ENCODE measurements at regions of chr6 and their contacts with region 1.

Region 1: DNA sequence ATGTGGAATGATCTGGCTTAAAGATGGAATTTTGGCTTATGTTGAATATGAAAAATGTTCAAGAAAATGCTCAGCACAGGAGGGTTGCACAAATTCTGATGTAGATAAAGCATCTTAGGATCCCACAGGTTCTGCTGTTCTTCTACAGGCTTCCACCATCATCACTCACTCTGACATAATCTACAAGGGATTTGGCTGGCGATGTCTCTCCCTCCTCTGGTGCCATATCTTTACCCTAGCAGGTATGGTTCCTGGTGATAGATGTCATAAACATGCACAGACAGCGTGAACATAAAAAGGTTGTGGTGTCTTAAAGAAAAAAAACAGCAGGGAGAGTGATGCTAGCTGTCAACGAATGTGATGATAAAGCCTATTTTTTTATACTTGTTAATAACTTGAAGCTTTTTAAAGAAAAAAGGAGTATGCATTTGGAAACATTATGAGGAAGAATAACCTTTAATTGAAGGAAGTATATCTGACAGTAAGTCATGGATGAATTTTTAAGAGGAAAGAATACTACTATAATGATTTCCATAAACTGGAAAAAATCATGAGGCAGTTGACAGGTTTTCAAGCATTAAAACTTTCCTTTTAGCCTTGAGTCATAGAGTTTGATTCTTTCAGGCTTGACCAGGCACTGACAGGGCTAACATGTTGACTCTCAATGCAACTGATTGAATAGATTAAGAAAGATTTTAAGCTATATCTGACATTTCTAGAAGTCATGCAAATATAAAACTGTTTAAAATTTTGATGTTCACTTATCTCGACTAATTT is 50.1 kb downstream of the OGFRL1 start:
- DNase-seq: no peak
- ATAC-seq: no peak
- H3K4me3 ChIP-seq: no peak overlapping the region
- H3K27ac ChIP-seq: no peak overlapping the region
- H3K4me1 ChIP-seq: peaks cover 4% of the 10 kb centered on the region; the same call in 1 of the 2 replicates
- H3K27me3 ChIP-seq: no peaks in the 10 kb centered on the region
- CTCF ChIP-seq: no peak

Region 2: GRCh38 chr6:70280400-70280853 is 1058.3 kb before region 1 on chr6:
- CTCF ChIA-PET with region 1: no interaction called
- POLR2A ChIA-PET with region 1: interaction called, 11 read pairs
- intact Hi-C with region 1: no loop called
- DNase-seq: no peak
- ATAC-seq: no peak
- H3K4me3 ChIP-seq: no peak overlapping the region
- H3K27ac ChIP-seq: no peak overlapping the region
- H3K4me1 ChIP-seq: no peaks in the 10 kb centered on the region
- H3K27me3 ChIP-seq: 0 out of 2 replicates have a peak, but pooled peaks cover 2% of the 10 kb centered on the region
- CTCF ChIP-seq: no peak

Region 3: DNA sequence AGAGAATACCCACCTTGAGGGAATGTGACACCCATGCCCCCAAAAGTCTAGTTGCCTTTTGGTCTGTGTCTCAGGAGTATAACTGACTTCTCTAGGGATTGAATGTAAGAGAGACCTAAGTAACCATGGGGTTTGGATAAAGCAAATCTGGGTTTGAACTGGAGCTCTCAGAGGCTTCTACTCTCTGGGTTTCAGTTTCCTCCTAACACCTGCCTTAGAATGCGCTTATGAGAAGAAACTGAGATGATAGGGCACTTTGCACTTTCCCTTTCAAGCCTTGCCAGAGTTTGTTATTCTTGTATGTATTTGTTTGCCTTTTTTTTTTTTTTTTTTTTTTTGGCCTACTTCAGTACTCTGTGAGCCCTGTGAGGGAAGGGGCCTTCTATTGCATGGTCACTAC is 752.6 kb before region 1 on chr6:
- CTCF ChIA-PET with region 1: no interaction called
- POLR2A ChIA-PET with region 1: no interaction called
- intact Hi-C with region 1: no loop called
- DNase-seq: no peak
- ATAC-seq: no peak
- H3K4me3 ChIP-seq: no peak overlapping the region
- H3K27ac ChIP-seq: no peak overlapping the region
- H3K4me1 ChIP-seq: no peaks in the 10 kb centered on the region
- H3K27me3 ChIP-seq: no peaks in the 10 kb centered on the region
- CTCF ChIP-seq: no peak

Region 4: GRCh38 chr6:71288228-71289001 is 50.3 kb before region 1 on chr6 and contains the start of gene OGFRL1:
- CTCF ChIA-PET with region 1: no interaction called
- POLR2A ChIA-PET with region 1: no interaction called
- intact Hi-C with region 1: no loop called
- DNase-seq: peak; percentile 69
- ATAC-seq: peak; percentile 90
- H3K4me3 ChIP-seq: peak within 1 kb of the TSS; percentile 76
- H3K27ac ChIP-seq: no peak within 1 kb of the TSS
- H3K4me1 ChIP-seq: peaks cover 12% of the 10 kb centered on the region
- H3K27me3 ChIP-seq: no peaks in the 10 kb centered on the region
- CTCF ChIP-seq: no peak
- total RNA-seq, gene OGFRL1: 5.2 and 6.0 TPM in 2 replicates